SK-N-SH (cell line): ENCODE measurements at regions of chr3 and their contacts with region 1.

Region 1: GRCh38 chr3:184371570-184372018 is 6.4 kb downstream of the THPO start:
- DNase-seq: peak; percentile 85
- H3K4me3 ChIP-seq: no peak overlapping the region; a peak in 1 of 4 replicates
- H3K27ac ChIP-seq: no peak overlapping the region
- H3K4me1 ChIP-seq: peaks cover 0 to 26% of the 10 kb centered on the region in 2 experiments; a peak in 3 of 4 replicates
- H3K27me3 ChIP-seq: no peaks in the 10 kb centered on the region
- CTCF ChIP-seq: peak; percentile 92
- EP300 ChIP-seq: no peak
- RAD21 ChIP-seq: peak; percentile 97

Region 2: GRCh38 chr3:184345317-184346144 is 26.1 kb before region 1 on chr3:
- CTCF ChIA-PET with region 1: interaction called, 15 read pairs
- POLR2A ChIA-PET with region 1: no interaction called
- DNase-seq: peak; percentile 73
- H3K4me3 ChIP-seq: no peak overlapping the region
- H3K27ac ChIP-seq: no peak overlapping the region
- H3K4me1 ChIP-seq: peaks cover 0 to under 1% of the 10 kb centered on the region in 2 experiments; a peak in 2 of 4 replicates
- H3K27me3 ChIP-seq: no peaks in the 10 kb centered on the region
- CTCF ChIP-seq: peak; percentile 54
- EP300 ChIP-seq: no peak
- RAD21 ChIP-seq: no peak; the same call in 1 of the 2 replicates

Region 3: GRCh38 chr3:184417619-184418327 is 46.2 kb after region 1 on chr3:
- CTCF ChIA-PET with region 1: interaction called, 47 read pairs
- POLR2A ChIA-PET with region 1: no interaction called
- DNase-seq: peak; percentile 85
- H3K4me3 ChIP-seq: no peak overlapping the region; a peak in 1 of 4 replicates
- H3K27ac ChIP-seq: no peak overlapping the region
- H3K4me1 ChIP-seq: no peaks in the 10 kb centered on the region; a peak in 1 of 4 replicates
- H3K27me3 ChIP-seq: no peaks in the 10 kb centered on the region
- CTCF ChIP-seq: peak; percentile 94
- EP300 ChIP-seq: no peak
- RAD21 ChIP-seq: peak; percentile 87

Region 4: GRCh38 chr3:184474897-184475296 is 103.3 kb after region 1 on chr3:
- CTCF ChIA-PET with region 1: interaction called, 45 read pairs
- POLR2A ChIA-PET with region 1: no interaction called
- DNase-seq: no peak
- H3K4me3 ChIP-seq: no peak overlapping the region
- H3K27ac ChIP-seq: no peak overlapping the region
- H3K4me1 ChIP-seq: no peaks in the 10 kb centered on the region
- H3K27me3 ChIP-seq: peaks cover 37% of the 10 kb centered on the region; the same call in 1 of the 2 replicates
- CTCF ChIP-seq: no peak
- EP300 ChIP-seq: no peak
- RAD21 ChIP-seq: no peak

Region 5: GRCh38 chr3:184523825-184524615 is 152.4 kb after region 1 on chr3:
- CTCF ChIA-PET with region 1: interaction called, 50 read pairs
- POLR2A ChIA-PET with region 1: interaction called, 3 read pairs
- DNase-seq: no peak
- H3K4me3 ChIP-seq: no peak overlapping the region
- H3K27ac ChIP-seq: no peak overlapping the region
- H3K4me1 ChIP-seq: peaks cover 0 to 3% of the 10 kb centered on the region in 2 experiments; a peak in 1 of 4 replicates
- H3K27me3 ChIP-seq: peaks cover 51% of the 10 kb centered on the region
- CTCF ChIP-seq: no peak
- EP300 ChIP-seq: no peak
- RAD21 ChIP-seq: no peak

Region 6: DNA sequence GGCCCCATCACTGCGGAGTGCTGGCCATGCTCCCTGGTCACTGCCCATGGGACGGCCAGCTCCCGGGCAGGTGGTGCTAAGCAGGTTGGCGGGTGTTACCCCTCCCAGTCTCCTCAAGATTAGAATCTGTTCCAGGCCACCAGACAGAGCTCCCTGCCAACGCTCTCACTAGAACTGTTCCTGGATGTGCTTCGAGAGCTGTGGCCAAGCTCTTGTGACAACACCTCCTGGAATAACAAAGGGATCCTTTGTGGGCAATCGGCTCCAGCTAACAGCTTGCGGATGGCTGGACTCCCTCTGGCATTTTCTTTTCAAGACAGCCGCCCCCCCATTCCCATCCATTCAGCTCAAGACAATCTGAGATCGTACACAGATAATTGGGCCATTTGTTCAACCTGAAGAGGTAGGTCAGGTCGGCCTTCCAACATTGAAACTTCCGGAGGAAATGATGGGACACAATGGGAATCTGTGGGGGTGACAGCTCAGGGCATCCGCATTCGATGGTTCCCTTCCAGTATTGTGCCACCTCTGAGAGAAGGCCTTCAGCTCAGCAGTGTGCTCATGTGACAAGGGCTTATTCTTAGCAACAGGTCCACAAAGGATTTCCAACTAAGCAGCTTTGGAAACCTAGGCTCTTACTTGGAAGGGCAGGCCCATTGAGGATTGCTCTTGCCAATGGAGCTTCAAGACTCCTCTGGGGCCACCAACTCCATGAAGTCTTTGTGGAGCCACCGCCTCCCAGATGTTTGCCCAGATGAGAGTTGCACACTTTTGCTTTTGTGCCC is 178.4 kb after region 1 on chr3:
- CTCF ChIA-PET with region 1: interaction called, 165 read pairs
- POLR2A ChIA-PET with region 1: no interaction called
- DNase-seq: no peak
- H3K4me3 ChIP-seq: no peak overlapping the region
- H3K27ac ChIP-seq: no peak overlapping the region
- H3K4me1 ChIP-seq: no peaks in the 10 kb centered on the region
- H3K27me3 ChIP-seq: peaks cover 9% of the 10 kb centered on the region; the same call in 1 of the 2 replicates
- CTCF ChIP-seq: no peak
- EP300 ChIP-seq: no peak
- RAD21 ChIP-seq: no peak